Caco-2 (cell line): ENCODE measurements at regions of chr3 and their contacts with region 1.

Region 1: DNA sequence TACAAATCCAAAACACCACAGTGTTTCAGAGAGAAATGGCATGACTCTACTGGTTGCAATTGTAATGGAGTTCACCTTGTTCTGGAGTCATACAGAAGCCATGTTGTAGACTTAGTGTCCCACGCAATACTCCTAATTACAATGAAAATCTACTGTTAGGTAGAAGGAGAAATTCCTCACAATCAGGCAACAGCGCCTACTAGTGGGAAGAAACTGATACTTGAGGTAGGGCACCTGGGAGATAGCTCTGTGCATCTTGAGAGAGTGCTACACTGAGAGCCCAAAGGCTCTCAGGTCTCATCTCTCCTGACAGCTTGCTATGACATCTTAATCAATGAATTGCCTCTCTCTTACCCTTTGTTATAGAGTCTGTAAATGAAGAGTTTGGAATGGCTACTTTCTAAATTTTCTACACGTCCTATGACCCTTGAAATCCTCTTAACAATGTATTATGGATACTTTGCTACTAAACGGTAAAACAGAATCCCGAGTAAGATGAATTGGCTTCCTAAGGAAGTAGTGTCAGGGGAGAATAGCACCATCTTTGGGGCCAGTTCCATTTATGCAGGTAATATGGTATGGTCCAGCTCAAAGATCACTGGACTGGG is 422.7 kb upstream of the TPRG1 start:
- DNase-seq: peak in 1 of 2 experiments; percentile 13
- H3K4me3 ChIP-seq: no peak overlapping the region
- H3K4me3 Mint-ChIP-seq: no peak overlapping the region
- H3K27ac Mint-ChIP-seq: no peak overlapping the region
- H3K4me1 ChIP-seq: peaks cover 47% of the 10 kb centered on the region
- H3K4me1 Mint-ChIP-seq: peaks cover 41% of the 10 kb centered on the region
- H3K27me3 ChIP-seq: no peaks in the 10 kb centered on the region
- H3K27me3 Mint-ChIP-seq: no peaks in the 10 kb centered on the region
- CTCF ChIP-seq: peak in 1 of 2 experiments; percentile 21

Region 2: GRCh38 chr3:187745201-187746058 is 1003.7 kb before region 1 on chr3 and contains the start of gene BCL6:
- CTCF ChIA-PET with region 1: no interaction called
- POLR2A ChIA-PET with region 1: interaction called, 5 read pairs
- intact Hi-C with region 1: loop called (anchors 1 kb)
- DNase-seq: peak; percentile 91 to 95
- H3K4me3 ChIP-seq: peak within 1 kb of the TSS; percentile 73
- H3K4me3 Mint-ChIP-seq: peak within 1 kb of the TSS; percentile 98
- H3K27ac Mint-ChIP-seq: peak within 1 kb of the TSS; percentile 97
- H3K4me1 ChIP-seq: peaks cover 37% of the 10 kb centered on the region
- H3K4me1 Mint-ChIP-seq: peaks cover 12% of the 10 kb centered on the region
- H3K27me3 ChIP-seq: no peaks in the 10 kb centered on the region
- H3K27me3 Mint-ChIP-seq: no peaks in the 10 kb centered on the region
- CTCF ChIP-seq: no peak
- total RNA-seq, gene BCL6: 35.8 and 40.4 TPM in 2 replicates

Region 3: DNA sequence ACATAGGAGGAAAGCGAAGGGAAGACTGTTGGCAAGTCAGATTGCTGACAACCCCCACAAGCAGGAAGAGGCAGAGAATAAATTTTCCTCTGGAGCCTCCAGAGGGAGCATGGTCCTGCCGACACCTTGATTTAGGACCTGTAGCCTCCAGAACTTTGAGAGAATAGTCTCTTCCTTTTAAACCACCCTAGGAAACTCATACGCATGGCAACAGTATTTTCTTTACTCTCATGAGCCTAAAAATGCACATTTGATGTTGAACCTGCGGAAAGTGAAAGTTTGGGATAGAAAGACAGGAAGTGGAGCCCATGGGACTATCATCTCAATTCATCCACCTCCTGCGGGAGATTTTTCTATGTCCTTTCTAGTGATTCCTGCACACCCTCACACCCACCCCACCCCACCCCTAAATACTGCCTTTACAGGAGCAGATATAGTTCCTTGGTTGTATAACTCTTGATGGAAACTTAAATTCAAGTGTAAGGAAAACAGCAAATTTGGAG is 711.8 kb before region 1 on chr3:
- CTCF ChIA-PET with region 1: no interaction called
- POLR2A ChIA-PET with region 1: no interaction called
- intact Hi-C with region 1: loop called (anchors 1 kb)
- DNase-seq: peak; percentile 82 to 88
- H3K4me3 ChIP-seq: no peak overlapping the region
- H3K4me3 Mint-ChIP-seq: peak overlapping the region; percentile 40
- H3K27ac Mint-ChIP-seq: peak overlapping the region; percentile 53
- H3K4me1 ChIP-seq: peaks cover 34% of the 10 kb centered on the region
- H3K4me1 Mint-ChIP-seq: peaks cover 31% of the 10 kb centered on the region
- H3K27me3 ChIP-seq: no peaks in the 10 kb centered on the region
- H3K27me3 Mint-ChIP-seq: no peaks in the 10 kb centered on the region
- CTCF ChIP-seq: peak; percentile 51 to 77

Region 4: GRCh38 chr3:188309437-188310269 is 439.5 kb before region 1 on chr3:
- CTCF ChIA-PET with region 1: no interaction called
- POLR2A ChIA-PET with region 1: no interaction called
- intact Hi-C with region 1: loop called (anchors 2 kb)
- DNase-seq: no peak
- H3K4me3 ChIP-seq: no peak overlapping the region
- H3K4me3 Mint-ChIP-seq: no peak overlapping the region
- H3K27ac Mint-ChIP-seq: peak overlapping the region; percentile 53
- H3K4me1 ChIP-seq: peaks cover 4% of the 10 kb centered on the region; the same call in 1 of the 2 replicates
- H3K4me1 Mint-ChIP-seq: peaks cover 13% of the 10 kb centered on the region
- H3K27me3 ChIP-seq: no peaks in the 10 kb centered on the region
- H3K27me3 Mint-ChIP-seq: no peaks in the 10 kb centered on the region
- CTCF ChIP-seq: no peak

Region 5: GRCh38 chr3:188546835-188547670 is 202.1 kb before region 1 on chr3:
- CTCF ChIA-PET with region 1: interaction called, 3 read pairs
- POLR2A ChIA-PET with region 1: no interaction called
- intact Hi-C with region 1: loop called (anchors 1 kb)
- DNase-seq: peak in 1 of 2 experiments; percentile 34
- H3K4me3 ChIP-seq: no peak overlapping the region
- H3K4me3 Mint-ChIP-seq: no peak overlapping the region
- H3K27ac Mint-ChIP-seq: peak overlapping the region; percentile 39
- H3K4me1 ChIP-seq: peaks cover 32% of the 10 kb centered on the region
- H3K4me1 Mint-ChIP-seq: peaks cover 36% of the 10 kb centered on the region
- H3K27me3 ChIP-seq: no peaks in the 10 kb centered on the region
- H3K27me3 Mint-ChIP-seq: no peaks in the 10 kb centered on the region
- CTCF ChIP-seq: no peak

Region 6: DNA sequence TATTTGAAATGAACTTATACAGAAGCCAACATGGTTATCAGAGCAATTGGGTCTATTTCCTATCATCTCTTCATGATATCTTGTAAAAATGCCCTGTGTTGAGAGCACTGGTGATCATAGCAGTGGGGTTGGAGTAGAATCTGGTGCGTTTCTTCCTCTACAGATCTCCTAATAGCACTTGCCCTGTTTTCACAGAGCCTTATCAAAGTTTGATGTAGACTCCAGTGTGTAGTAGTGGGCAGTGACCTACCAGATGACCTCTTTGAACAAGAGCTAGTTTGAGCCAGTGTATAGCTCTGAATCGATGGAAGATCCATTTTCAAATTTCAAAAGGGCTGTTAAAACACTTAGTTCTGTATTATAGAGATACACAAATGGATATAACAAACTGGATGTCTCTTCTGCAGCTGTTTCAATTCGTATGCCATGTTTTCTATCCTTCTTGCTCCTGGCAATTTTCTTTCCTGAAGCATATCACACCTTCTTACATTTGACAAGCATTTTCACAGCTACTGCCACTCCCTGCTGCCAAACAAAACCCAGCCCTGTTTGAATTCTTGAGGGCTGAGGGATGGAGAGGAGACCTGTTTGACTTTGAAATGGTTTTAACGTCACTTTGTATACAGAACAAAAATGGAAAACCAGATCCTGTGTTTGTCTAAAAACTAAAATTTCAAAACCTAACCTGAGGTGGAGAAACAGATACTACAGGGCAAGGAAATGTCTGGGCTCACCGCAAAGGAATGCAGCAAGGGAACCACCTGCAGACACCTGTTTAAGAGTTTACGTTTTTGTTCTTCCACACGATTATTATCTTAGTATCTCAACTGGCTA is 68.2 kb after region 1 on chr3:
- CTCF ChIA-PET with region 1: no interaction called
- POLR2A ChIA-PET with region 1: no interaction called
- intact Hi-C with region 1: loop called (anchors 1 kb)
- DNase-seq: peak in 1 of 2 experiments; percentile 58
- H3K4me3 ChIP-seq: no peak overlapping the region
- H3K4me3 Mint-ChIP-seq: peak overlapping the region; percentile 60
- H3K27ac Mint-ChIP-seq: peak overlapping the region; percentile 39
- H3K4me1 ChIP-seq: peaks cover 26% of the 10 kb centered on the region
- H3K4me1 Mint-ChIP-seq: peaks cover 30% of the 10 kb centered on the region
- H3K27me3 ChIP-seq: no peaks in the 10 kb centered on the region
- H3K27me3 Mint-ChIP-seq: no peaks in the 10 kb centered on the region
- CTCF ChIP-seq: no peak

Region 7: DNA sequence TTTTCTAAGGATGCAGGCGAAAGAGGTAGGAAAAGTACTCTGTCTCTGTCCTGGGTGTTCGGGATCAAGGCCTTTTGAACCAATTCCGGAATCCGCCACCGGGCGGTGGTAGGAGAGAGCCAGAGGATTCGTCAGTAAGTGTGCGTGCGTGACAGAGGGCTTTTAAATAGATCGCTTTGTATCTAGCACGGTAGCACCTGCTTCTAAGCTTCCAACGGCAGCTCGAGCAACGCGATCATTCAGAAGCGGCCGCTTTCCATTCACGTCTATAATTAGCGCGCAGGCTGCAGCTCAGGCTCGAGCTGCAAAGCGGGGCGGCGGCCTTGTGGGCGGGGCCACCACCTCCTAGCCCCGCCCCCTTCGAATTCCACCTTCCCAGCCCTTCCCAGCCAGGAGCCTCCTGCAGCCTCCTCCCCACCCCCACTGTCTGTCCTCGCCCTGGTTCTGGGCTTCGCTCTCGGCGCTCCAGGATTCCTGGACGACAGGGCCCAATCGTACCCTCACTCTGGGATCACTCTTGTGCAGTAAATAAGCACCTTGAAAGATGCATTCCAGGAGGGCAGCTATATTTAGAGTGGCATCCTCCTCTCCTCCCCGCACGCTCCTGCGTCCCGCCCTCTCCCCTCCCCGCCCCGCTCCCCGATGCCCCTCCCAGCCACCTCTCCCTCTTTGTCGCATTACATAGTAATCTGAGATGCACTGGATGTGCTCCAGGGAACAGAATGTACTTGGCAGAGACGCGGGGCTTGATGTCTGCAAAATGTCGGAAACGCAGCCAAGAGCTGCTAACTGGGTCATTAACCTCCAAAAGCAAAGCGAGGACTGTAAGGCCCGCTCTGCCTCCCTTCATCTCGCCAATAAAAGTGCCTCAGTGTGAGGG is 198.5 kb after region 1 on chr3:
- CTCF ChIA-PET with region 1: no interaction called
- POLR2A ChIA-PET with region 1: no interaction called
- intact Hi-C with region 1: loop called (anchors 1 kb)
- DNase-seq: peak; percentile 83 to 86
- H3K4me3 ChIP-seq: peak overlapping the region; percentile 46
- H3K4me3 Mint-ChIP-seq: peak overlapping the region; percentile 61
- H3K27ac Mint-ChIP-seq: peak overlapping the region; percentile 62
- H3K4me1 ChIP-seq: peaks cover 30% of the 10 kb centered on the region
- H3K4me1 Mint-ChIP-seq: peaks cover 19% of the 10 kb centered on the region
- H3K27me3 ChIP-seq: no peaks in the 10 kb centered on the region
- H3K27me3 Mint-ChIP-seq: no peaks in the 10 kb centered on the region
- CTCF ChIP-seq: peak; percentile 30 to 39

Region 8: GRCh38 chr3:189355481-189356201 is 606.5 kb after region 1 on chr3:
- CTCF ChIA-PET with region 1: no interaction called
- POLR2A ChIA-PET with region 1: no interaction called
- intact Hi-C with region 1: no loop called
- DNase-seq: peak; percentile 49 to 62
- H3K4me3 ChIP-seq: no peak overlapping the region
- H3K4me3 Mint-ChIP-seq: no peak overlapping the region
- H3K27ac Mint-ChIP-seq: peak overlapping the region; percentile 86
- H3K4me1 ChIP-seq: peaks cover 38% of the 10 kb centered on the region
- H3K4me1 Mint-ChIP-seq: peaks cover 19% of the 10 kb centered on the region
- H3K27me3 ChIP-seq: no peaks in the 10 kb centered on the region
- H3K27me3 Mint-ChIP-seq: no peaks in the 10 kb centered on the region
- CTCF ChIP-seq: no peak